Ovary (tissue), 10 donors: ENCODE measurements at regions of chr6 and their contacts with region 1.

Region 1: DNA sequence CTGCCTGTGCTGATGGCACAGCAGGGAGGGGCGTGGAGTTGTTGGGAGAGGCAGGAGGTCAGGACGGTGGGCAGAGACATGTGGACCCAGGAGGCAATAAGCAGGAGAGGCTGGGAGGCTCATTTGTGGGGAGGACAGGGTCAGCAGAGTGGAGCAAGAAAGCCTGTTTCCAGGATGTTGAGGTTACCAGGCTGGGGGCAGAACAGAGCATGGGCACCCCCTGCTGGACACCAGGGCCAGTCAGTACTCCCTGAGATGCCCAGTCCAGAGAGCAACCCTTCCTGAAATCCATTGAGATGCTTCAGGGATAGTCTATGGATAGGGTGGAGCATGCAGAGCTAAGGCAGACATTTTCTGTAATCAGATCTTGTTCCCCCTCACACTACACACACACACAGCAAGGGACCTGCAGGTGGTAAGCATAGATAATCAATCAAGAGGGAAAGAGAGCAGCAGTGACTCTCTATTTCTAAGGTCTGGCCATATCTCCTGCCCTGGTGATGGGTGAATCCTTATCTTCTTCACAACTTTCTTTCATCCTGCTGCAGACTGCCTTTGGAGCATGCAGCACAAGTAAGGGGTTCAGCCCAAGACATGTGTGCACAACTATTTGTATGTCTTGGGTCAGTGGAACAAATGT is 41.7 kb downstream of the MOCS1 start:
- DNase-seq: peak; percentile 54 to 83 (median 69)
- H3K4me3 ChIP-seq: no peak overlapping the region
- H3K27ac ChIP-seq: no peak overlapping the region
- H3K4me1 ChIP-seq: peaks cover 5% of the 10 kb centered on the region
- H3K27me3 ChIP-seq: no peaks in the 10 kb centered on the region
- CTCF ChIP-seq: peak; percentile 42 to 62 (median 46)
- EP300 ChIP-seq: no peak
- POLR2A ChIP-seq: no peak

Region 2: GRCh38 chr6:39361657-39362486 is 530.7 kb before region 1 on chr6:
- intact Hi-C with region 1: loop called in 2 of 4 experiments (anchors 5 to 10 kb)
- DNase-seq: peak; percentile 53 to 73 (median 66)
- H3K4me3 ChIP-seq: no peak overlapping the region
- H3K27ac ChIP-seq: no peak overlapping the region
- H3K4me1 ChIP-seq: no peaks in the 10 kb centered on the region
- H3K27me3 ChIP-seq: no peaks in the 10 kb centered on the region
- CTCF ChIP-seq: peak; percentile 59 to 71 (median 59)
- EP300 ChIP-seq: no peak
- POLR2A ChIP-seq: no peak

Region 3: DNA sequence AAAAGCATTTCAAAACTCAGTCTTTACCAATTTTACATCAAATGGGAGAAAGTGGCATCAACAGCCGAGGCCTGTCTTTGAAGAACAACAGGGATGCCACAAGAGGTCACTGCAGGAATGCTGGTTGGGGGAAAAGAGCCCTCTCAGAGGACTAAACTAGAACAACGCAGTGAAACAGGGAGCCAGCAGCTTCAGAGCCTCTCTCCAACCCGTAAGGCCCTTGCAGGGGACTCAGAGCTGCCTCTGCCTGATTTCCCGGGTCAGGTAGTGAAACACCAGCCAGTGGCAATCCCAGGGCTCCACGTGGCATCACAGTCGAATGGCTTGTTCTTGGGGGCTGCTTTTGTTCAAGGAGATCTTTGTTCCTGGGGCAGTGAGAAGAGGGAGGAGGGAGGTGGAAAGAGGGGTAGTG is 515.1 kb before region 1 on chr6:
- intact Hi-C with region 1: loop called in 2 of 4 experiments (anchors 1 to 10 kb)
- DNase-seq: peak; percentile 53 to 71 (median 64)
- H3K4me3 ChIP-seq: no peak overlapping the region
- H3K27ac ChIP-seq: no peak overlapping the region
- H3K4me1 ChIP-seq: no peaks in the 10 kb centered on the region
- H3K27me3 ChIP-seq: no peaks in the 10 kb centered on the region
- CTCF ChIP-seq: peak; percentile 7 to 53 (median 45)
- EP300 ChIP-seq: no peak
- POLR2A ChIP-seq: no peak

Region 4: GRCh38 chr6:40232698-40233097 is 340.1 kb after region 1 on chr6:
- intact Hi-C with region 1: no loop called
- DNase-seq: no peak
- H3K4me3 ChIP-seq: no peak overlapping the region
- H3K27ac ChIP-seq: no peak overlapping the region
- H3K4me1 ChIP-seq: no peaks in the 10 kb centered on the region
- H3K27me3 ChIP-seq: no peaks in the 10 kb centered on the region
- CTCF ChIP-seq: no peak
- EP300 ChIP-seq: no peak
- POLR2A ChIP-seq: no peak

Region 5: GRCh38 chr6:40244699-40245098 is 352.1 kb after region 1 on chr6:
- intact Hi-C with region 1: no loop called
- DNase-seq: no peak
- H3K4me3 ChIP-seq: no peak overlapping the region
- H3K27ac ChIP-seq: no peak overlapping the region
- H3K4me1 ChIP-seq: no peaks in the 10 kb centered on the region
- H3K27me3 ChIP-seq: no peaks in the 10 kb centered on the region
- CTCF ChIP-seq: no peak
- EP300 ChIP-seq: no peak
- POLR2A ChIP-seq: no peak